CD4-positive, alpha-beta T cell (primary cell): ENCODE measurements at regions of chr20 and their contacts with region 1.

Region 1: DNA sequence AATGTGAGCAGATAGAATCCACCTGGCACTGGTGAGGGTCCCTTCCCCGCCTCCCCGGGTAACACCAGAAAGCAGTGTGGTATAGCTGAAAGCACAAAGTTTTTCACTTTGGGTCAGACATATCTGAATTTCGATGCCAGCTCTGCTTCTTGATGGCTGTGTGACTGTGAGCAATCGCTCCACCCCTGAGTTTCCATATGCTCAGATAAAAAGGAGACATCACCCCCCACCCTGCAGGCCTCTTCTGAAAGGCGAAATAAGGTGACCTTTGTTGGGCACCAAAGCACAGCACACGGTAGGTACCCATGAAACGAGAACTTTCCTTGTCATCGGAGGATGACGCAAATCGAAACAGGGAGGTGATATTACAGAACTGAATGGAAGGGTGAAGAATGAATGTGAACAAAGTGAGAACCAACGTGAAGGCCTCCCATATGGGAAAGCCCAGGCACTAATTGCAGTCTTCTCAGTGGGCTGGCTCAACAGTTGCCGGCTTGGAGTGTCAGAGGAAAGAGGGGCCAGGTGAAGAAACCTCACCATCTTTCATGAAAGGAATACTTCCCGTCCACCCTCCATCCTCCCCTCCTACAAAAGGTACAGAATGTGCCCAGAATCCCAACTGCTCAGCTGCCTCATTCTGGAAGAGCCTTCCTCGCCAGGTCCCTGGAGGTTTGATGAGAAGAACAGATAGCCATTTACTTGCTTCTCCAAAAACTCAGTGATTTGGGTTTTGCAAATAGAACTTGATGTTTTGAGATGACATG is 61.8 kb downstream of the NFATC2 start:
- DNase-seq: peak in 5 of 14 experiments; percentile 25 to 69 (median 42)
- ATAC-seq: peak; percentile 56
- H3K4me3 ChIP-seq: peak overlapping the region; percentile 12
- H3K4me3 Mint-ChIP-seq: peak overlapping the region; percentile 62
- H3K27ac ChIP-seq: peak overlapping the region; percentile 33 to 68
- H3K27ac Mint-ChIP-seq: peak overlapping the region; percentile 87
- H3K4me1 ChIP-seq: peaks cover 53% of the 10 kb centered on the region
- H3K4me1 Mint-ChIP-seq: peaks cover 90% of the 10 kb centered on the region
- H3K27me3 ChIP-seq: no peaks in the 10 kb centered on the region
- H3K27me3 Mint-ChIP-seq: no peaks in the 10 kb centered on the region
- CTCF ChIP-seq: no peak

Region 2: DNA sequence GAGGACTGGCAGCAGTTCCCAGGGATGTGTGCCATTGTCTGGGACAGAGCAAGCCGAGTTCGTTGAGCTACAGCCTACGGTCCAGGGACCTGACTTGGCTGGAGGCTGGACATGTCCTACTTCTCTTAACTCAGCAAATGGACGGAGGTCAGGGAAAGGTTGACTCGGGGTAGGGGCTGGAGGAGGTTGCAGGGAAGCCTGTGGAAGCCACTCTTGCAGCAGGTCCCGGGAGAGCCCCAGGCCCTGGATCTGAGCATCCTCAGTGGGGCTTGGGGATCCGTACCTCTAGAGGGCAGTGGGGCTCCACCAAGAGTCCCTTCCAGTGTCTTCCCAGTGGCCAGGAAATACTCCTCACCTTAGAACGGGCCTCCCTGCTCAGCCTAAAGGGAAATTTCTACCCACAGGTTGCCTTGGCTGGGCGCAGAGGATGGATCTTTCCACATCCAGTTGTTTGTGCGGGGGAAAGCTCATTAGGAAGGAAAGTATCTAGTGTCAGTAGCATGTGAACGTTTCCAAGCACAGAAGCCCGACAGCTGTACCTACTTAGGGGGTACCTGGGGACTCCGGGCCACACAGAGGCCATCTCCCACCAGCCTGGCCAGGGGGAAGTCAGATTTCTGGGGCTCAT is 108.4 kb before region 1 on chr20:
- CTCF ChIA-PET with region 1: no interaction called
- POLR2A ChIA-PET with region 1: no interaction called
- intact Hi-C with region 1: no loop called
- DNase-seq: peak; percentile 29 to 75 (median 50)
- ATAC-seq: peak; percentile 60
- H3K4me3 ChIP-seq: no peak overlapping the region
- H3K4me3 Mint-ChIP-seq: no peak overlapping the region
- H3K27ac ChIP-seq: no peak overlapping the region
- H3K27ac Mint-ChIP-seq: no peak overlapping the region
- H3K4me1 ChIP-seq: peaks cover 8% of the 10 kb centered on the region
- H3K4me1 Mint-ChIP-seq: no peaks in the 10 kb centered on the region
- H3K27me3 ChIP-seq: no peaks in the 10 kb centered on the region
- H3K27me3 Mint-ChIP-seq: no peaks in the 10 kb centered on the region
- CTCF ChIP-seq: peak; percentile 83

Region 3: DNA sequence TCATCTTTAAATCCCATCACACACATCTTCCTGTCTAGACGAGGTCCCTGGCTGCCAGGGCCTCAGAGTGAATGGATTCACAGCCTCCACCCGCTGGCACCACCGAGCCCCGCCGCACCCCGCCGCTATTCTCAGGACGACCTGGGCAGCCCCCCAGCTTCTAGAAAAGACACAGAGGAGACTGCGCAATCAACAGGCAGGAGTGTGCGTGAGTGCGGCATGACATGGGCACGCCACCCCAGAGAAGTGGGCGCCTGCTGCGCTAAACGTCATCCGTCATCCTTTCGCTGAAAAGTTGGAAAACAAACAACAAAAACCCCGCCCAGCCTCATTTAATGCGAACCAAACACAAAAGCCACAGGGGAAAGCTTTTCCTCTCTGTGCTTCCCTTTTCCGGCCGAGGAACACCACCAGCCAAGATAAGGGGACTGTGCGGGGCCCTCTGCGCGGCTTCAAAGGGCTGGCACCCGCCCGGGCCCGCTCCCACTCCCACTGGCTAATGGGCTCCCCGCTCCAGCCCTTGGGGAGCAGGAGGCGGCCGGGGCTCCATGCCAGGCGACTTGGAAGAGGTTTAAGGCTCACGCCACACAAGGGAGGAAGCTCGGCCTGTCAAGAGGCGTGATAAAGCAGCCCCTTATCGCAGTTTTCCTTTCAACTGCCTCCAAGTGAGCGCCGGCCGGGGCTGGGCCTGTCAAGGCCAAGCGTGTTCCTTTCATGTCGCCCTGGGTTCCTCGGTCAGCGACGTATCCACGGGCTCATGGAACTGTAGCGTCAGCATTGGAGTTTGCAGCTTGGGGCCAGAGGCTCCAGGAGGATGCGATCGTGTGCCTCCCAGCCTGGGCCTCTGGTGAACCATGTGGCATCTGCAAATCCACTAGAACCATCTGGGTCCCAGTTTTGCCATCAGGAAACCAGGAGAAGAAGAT is 11.7 kb after region 1 on chr20:
- CTCF ChIA-PET with region 1: interaction called, 3 read pairs
- POLR2A ChIA-PET with region 1: interaction called, 16 read pairs
- intact Hi-C with region 1: no loop called
- DNase-seq: peak in 1 of 14 experiments; percentile 33
- ATAC-seq: no peak
- H3K4me3 ChIP-seq: no peak overlapping the region
- H3K4me3 Mint-ChIP-seq: peak overlapping the region; percentile 23
- H3K27ac ChIP-seq: no peak overlapping the region
- H3K27ac Mint-ChIP-seq: peak overlapping the region; percentile 97
- H3K4me1 ChIP-seq: peaks cover 84% of the 10 kb centered on the region
- H3K4me1 Mint-ChIP-seq: peaks cover 84% of the 10 kb centered on the region
- H3K27me3 ChIP-seq: no peaks in the 10 kb centered on the region
- H3K27me3 Mint-ChIP-seq: no peaks in the 10 kb centered on the region
- CTCF ChIP-seq: no peak

Region 4: GRCh38 chr20:51500311-51500710 is 19.6 kb after region 1 on chr20:
- CTCF ChIA-PET with region 1: interaction called, 4 read pairs
- POLR2A ChIA-PET with region 1: interaction called, 16 read pairs
- intact Hi-C with region 1: loop called in 1 of 2 experiments (anchors 2 kb)
- DNase-seq: peak in 13 of 14 experiments; percentile 22 to 86 (median 52)
- ATAC-seq: peak; percentile 84
- H3K4me3 ChIP-seq: no peak overlapping the region
- H3K4me3 Mint-ChIP-seq: peak overlapping the region; percentile 63
- H3K27ac ChIP-seq: peak overlapping the region; percentile 39 to 60
- H3K27ac Mint-ChIP-seq: peak overlapping the region; percentile 97
- H3K4me1 ChIP-seq: peaks cover 67% of the 10 kb centered on the region
- H3K4me1 Mint-ChIP-seq: peaks cover 91% of the 10 kb centered on the region
- H3K27me3 ChIP-seq: no peaks in the 10 kb centered on the region
- H3K27me3 Mint-ChIP-seq: no peaks in the 10 kb centered on the region
- CTCF ChIP-seq: no peak